Heart left ventricle (tissue), 16 donors: ENCODE measurements at regions of chr1 and their contacts with region 1.

Region 1: DNA sequence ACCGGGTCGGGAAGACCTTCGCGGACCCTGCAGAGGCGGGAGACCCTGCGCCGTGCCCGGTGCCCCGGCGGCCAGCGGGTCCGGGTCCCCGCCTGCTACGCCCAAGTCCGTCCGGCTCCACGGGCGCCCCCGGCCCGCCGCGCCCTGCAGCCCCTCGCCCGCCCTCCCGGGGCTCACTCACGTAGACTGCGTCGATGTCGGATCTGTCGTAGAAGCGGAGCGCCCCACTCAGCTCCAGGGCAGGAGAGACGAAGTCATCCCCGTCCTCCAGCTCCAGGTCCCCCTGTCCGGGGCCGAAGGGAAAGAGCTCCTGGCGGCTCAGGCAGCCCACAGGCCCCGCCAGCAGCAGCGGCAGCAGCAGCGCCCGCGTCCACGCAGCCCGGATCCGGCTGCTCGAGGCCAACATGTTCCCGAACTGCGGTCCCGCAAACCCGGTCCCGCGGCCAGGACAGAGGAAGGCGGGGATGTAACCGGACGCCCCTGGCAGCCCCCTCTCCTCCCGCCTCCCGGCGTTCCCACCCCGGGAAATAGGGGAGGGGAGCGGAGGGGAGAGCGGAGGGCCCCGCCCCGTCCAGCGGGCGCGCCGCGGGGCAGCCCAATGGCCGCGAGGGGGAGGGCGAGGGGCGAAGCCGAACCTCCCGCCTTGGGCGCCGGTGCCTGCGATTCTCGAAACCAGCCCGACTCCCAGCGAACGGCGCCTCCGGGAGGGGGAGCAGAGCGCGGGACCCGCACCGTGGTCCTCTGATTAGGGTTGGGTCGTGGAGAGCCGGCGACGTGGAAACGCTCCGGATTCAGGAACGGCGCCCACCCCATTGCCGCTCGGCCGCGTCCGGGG is at the start of gene NID1:
- DNase-seq: peak; percentile 91 to 94 (median 92)
- ATAC-seq: peak; percentile 59 to 85 (median 80)
- H3K4me3 ChIP-seq: peak within 1 kb of the TSS; percentile 71 to 98 (median 89)
- H3K27ac ChIP-seq: peak within 1 kb of the TSS; percentile 93 to 100 (median 97)
- H3K4me1 ChIP-seq: peaks cover 0 to 68% (median 51%) of the 10 kb centered on the region in 12 donors
- H3K27me3 ChIP-seq: peaks cover 0 to 16% (median 0%) of the 10 kb centered on the region in 9 donors
- CTCF ChIP-seq: peak; percentile 22 to 75 (median 52)
- POLR2A ChIP-seq: peak; percentile 72 to 94
- total RNA-seq, gene NID1: 33.3 to 157 (median 61.7) TPM

Region 2: GRCh38 chr1:235504496-235505222 is 560.2 kb before region 1 on chr1:
- intact Hi-C with region 1: loop called in 1 of 10 experiments (anchors 10 kb)
- DNase-seq: peak; percentile 99 to 100 (median 99)
- ATAC-seq: peak; percentile 94 to 96 (median 94)
- H3K4me3 ChIP-seq: peak overlapping the region; percentile 58 to 96 (median 83)
- H3K27ac ChIP-seq: peak overlapping the region; percentile 92 to 99 (median 98)
- H3K4me1 ChIP-seq: peaks cover 0 to 32% (median 16%) of the 10 kb centered on the region in 12 donors
- H3K27me3 ChIP-seq: no peaks in the 10 kb centered on the region
- CTCF ChIP-seq: peak; percentile 80 to 100 (median 92)
- POLR2A ChIP-seq: peak; percentile 6 to 61

Region 3: GRCh38 chr1:235806123-235806522 is 258.8 kb before region 1 on chr1:
- intact Hi-C with region 1: no loop called
- DNase-seq: no peak
- ATAC-seq: no peak
- H3K4me3 ChIP-seq: no peak overlapping the region
- H3K27ac ChIP-seq: no peak overlapping the region
- H3K4me1 ChIP-seq: peaks cover 0 to 5% (median 0%) of the 10 kb centered on the region in 12 donors
- H3K27me3 ChIP-seq: no peaks in the 10 kb centered on the region
- CTCF ChIP-seq: no peak
- POLR2A ChIP-seq: no peak

Region 4: GRCh38 chr1:235866913-235867845 is 197.7 kb before region 1 on chr1:
- intact Hi-C with region 1: loop called in 1 of 10 experiments (anchors 10 kb)
- DNase-seq: peak; percentile 95 to 99 (median 96)
- ATAC-seq: peak; percentile 94 to 99 (median 98)
- H3K4me3 ChIP-seq: peak overlapping the region; percentile 76 to 99 (median 93)
- H3K27ac ChIP-seq: peak overlapping the region; percentile 83 to 98 (median 94)
- H3K4me1 ChIP-seq: peaks cover 0 to 47% (median 22%) of the 10 kb centered on the region in 12 donors
- H3K27me3 ChIP-seq: no peaks in the 10 kb centered on the region
- CTCF ChIP-seq: no peak
- POLR2A ChIP-seq: peak; percentile 20 to 90

Region 5: DNA sequence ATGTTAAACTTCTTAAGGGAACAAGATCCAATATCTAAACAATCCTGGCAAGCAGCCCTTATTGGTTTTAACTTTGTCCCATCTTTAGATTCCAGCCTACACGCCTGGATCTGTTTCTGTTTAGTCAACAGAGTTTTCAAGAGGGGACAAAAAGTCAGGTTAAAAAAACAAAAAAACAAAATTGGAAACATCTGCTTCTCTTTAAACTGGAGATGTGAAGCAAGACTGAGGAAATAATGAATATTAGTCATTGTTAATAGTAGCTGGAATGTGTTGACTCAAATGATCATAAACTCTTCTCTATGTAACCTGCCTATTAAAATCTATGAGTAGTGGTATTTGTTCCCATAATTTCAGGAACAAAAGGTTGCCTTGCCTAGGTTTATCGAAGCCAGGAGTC is 55.0 kb before region 1 on chr1:
- intact Hi-C with region 1: loop called in 3 of 10 experiments (anchors 5 to 10 kb)
- DNase-seq: no peak
- ATAC-seq: peak in 2 of 4 donors; percentile 18 to 77
- H3K4me3 ChIP-seq: no peak overlapping the region
- H3K27ac ChIP-seq: peak overlapping the region; percentile 39 to 79 (median 66)
- H3K4me1 ChIP-seq: peaks cover 0 to 24% (median 1%) of the 10 kb centered on the region in 12 donors
- H3K27me3 ChIP-seq: no peaks in the 10 kb centered on the region
- CTCF ChIP-seq: no peak
- POLR2A ChIP-seq: no peak

Region 6: GRCh38 chr1:236018885-236019453 is 45.9 kb before region 1 on chr1:
- intact Hi-C with region 1: loop called in 2 of 10 experiments (anchors 5 kb)
- DNase-seq: peak; percentile 84 to 92 (median 86)
- ATAC-seq: peak; percentile 74 to 86 (median 82)
- H3K4me3 ChIP-seq: no peak overlapping the region
- H3K27ac ChIP-seq: peak overlapping the region; percentile 54 to 97 (median 84)
- H3K4me1 ChIP-seq: peaks cover 0 to 67% (median 26%) of the 10 kb centered on the region in 12 donors
- H3K27me3 ChIP-seq: no peaks in the 10 kb centered on the region
- CTCF ChIP-seq: no peak
- POLR2A ChIP-seq: no peak